ENCODE measurements at regions of chr11 and their contacts with region 1.

Region 1: DNA sequence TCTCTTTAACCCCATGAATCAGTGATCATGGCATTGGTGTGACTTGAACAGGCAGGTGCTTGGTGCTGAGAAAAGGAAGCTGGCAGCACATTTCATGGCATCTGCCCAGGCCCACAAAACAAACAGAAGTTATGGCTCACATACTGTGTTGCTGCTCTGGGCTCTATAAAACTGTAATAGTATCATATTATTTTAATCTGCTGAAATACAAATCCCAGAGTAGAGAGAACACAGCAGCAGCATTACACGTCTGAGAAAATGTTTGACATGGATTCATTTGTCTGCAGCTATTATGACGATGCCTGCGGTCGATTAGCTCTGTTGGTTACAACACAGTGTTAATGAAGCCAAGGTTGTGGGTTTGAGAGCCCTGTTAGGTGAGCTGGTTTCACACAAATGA is 80.8 kb downstream of the ALX4 start:
- DNase-seq: no peak
- ATAC-seq: no peak
- H3K4me3 Mint-ChIP-seq: no peak overlapping the region
- H3K27ac Mint-ChIP-seq: no peak overlapping the region
- H3K4me1 Mint-ChIP-seq: no peaks in the 10 kb centered on the region
- H3K27me3 Mint-ChIP-seq: no peaks in the 10 kb centered on the region

Region 2: DNA sequence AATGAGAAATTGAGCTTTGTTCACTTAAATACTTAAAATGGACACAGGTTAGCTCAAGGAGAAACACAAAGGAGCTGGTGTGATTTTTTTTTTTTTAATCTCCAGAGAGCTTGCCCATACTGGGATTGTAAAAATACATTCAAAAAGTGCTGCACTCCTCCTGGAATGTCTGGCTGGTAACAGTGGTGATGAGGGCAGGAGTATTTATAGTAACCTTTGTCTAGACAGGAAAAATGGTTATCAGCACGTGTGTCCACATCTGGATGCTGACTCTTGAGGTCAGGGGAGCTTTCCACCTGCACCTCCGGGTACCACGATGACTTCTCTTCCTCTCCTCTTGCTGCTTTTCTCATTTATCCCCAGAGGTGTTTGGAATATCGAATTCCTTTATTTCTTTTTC is 103.5 kb before region 1 on chr11:
- CTCF ChIA-PET with region 1: no interaction called
- POLR2A ChIA-PET with region 1: no interaction called
- intact Hi-C with region 1: loop called in 1 of 2 experiments (anchors 5 kb)
- DNase-seq: no peak
- ATAC-seq: no peak
- H3K4me3 Mint-ChIP-seq: no peak overlapping the region
- H3K27ac Mint-ChIP-seq: no peak overlapping the region
- H3K4me1 Mint-ChIP-seq: no peaks in the 10 kb centered on the region
- H3K27me3 Mint-ChIP-seq: no peaks in the 10 kb centered on the region